ENCODE measurements at regions of chr2 and their contacts with region 1.

Region 1: GRCh38 chr2:141654311-141654710 is 476.5 kb downstream of the LRP1B start:
- DNase-seq: no peak
- H3K4me3 ChIP-seq: no peak overlapping the region
- CTCF ChIP-seq: no peak

Region 2: GRCh38 chr2:141714496-141714895 is 60.2 kb after region 1 on chr2:
- in situ Hi-C with region 1: loop called (anchors 10 kb)
- DNase-seq: no peak
- H3K4me3 ChIP-seq: no peak overlapping the region
- CTCF ChIP-seq: no peak

Region 3: DNA sequence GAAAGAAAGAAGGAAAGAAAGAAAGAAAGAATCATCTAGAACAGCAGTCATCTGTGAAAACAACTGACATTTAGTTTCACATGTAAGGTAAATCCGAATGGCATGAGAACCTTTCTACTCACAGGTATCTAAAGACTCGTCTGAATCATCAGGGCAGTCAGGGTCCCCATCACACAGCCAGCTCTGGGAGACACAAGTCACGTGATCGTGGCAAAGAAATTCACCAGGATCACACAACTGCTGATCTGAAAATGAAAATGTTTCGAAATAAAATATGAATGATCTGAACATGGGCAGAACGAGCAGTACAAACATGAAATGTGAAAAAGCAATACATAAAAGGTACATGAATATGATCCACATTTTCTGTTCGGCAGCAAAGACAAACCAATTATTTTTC is 155.8 kb after region 1 on chr2:
- in situ Hi-C with region 1: no loop called
- DNase-seq: no peak
- H3K4me3 ChIP-seq: no peak overlapping the region
- CTCF ChIP-seq: no peak

Region 4: GRCh38 chr2:141899740-141900139 is 245.4 kb after region 1 on chr2:
- in situ Hi-C with region 1: no loop called
- DNase-seq: no peak
- H3K4me3 ChIP-seq: no peak overlapping the region
- CTCF ChIP-seq: no peak

Region 5: GRCh38 chr2:142104134-142104758 is 449.9 kb after region 1 on chr2:
- in situ Hi-C with region 1: no loop called
- DNase-seq: no peak
- H3K4me3 ChIP-seq: no peak overlapping the region
- CTCF ChIP-seq: no peak

Measured in astrocyte of the cerebellum (primary cell).